ENCODE measurements at regions of chr12 and their contacts with region 1.

Region 1: DNA sequence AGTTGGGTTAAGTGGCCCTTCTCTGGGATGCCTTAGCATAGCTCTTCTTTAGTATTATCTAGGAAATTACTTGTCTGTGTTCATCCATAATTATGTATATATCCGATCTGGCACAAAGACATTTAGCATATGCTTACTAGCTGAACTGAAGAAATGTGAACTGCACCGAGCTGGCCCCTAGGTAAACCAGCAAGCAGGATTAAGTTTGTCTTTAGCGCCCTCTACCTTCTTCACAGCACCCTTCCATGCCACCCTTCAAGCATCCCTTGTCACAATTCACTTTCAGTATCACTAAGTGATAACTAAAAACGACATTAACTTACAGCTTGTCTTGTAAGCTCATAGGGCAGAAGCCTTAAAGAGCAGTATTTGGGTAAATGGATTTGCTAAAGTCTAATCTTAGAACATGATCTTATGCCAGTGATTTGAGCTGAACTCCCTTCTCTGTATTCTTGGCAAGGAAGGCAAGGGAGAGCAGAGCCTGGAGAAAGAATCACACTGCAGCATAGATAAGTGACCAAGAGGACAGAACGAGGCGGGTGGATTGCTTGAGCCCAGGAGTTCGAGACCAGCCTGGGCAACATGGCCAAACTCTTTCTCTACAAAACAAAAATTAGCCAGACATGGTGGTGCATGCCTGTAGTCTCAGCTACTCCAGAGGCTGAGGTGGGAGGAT is 2.6 kb upstream of the HAL start:
- DNase-seq: peak in 5 of 10 donors; percentile 32 to 85 (median 39)

Region 2: DNA sequence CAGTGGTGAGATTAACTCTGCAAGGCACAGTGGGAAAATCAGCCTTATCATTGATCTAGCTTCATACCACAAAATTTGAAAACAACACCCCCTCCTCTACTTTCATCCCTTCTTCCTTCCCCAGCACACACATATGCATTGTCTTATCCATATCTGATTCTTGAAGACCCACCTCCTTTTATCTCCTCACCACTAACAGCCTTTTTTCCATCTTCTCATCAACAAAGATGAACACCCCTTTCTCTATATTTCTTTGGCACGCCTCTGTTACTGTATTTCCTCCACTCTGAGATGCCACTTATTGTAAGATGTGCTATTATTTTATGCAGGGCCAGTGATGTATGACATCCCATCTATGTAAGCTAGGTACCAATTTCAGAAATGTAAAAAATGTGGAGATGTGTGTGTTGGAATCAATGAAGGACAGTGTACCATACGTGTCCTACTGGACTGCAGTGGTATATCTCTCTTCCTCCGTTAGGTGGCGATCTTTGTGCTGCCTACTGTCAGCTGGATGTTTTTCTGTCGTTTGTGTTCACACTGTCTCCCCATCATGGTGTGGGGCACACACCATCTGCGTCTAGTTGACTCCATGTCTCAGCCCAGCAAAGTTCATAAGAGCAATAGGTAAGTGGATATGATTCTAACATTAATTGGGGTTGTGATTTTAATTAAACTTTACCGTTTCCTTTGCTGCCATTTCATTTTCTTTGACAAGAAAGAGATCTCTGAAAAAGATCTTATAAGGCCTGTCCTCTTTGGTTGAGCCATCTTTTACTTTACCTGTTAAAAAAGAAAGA is 80.4 kb before region 1 on chr12:
- intact Hi-C with region 1: loop called (anchors 1 kb)
- DNase-seq: peak in 2 of 10 donors; percentile 12 to 34